Mammary epithelial cell (primary cell): ENCODE measurements at regions of chrX and their contacts with region 1.

Region 1: GRCh38 chrX:38754102-38754790 is 47.0 kb upstream of the MID1IP1 start:
- DNase-seq: peak; percentile 35
- H3K4me3 ChIP-seq: no peak overlapping the region
- H3K27ac ChIP-seq: no peak overlapping the region
- H3K4me1 ChIP-seq: no peaks in the 10 kb centered on the region
- H3K27me3 ChIP-seq: peaks cover 2% of the 10 kb centered on the region
- CTCF ChIP-seq: peak; percentile 59 to 74

Region 2: DNA sequence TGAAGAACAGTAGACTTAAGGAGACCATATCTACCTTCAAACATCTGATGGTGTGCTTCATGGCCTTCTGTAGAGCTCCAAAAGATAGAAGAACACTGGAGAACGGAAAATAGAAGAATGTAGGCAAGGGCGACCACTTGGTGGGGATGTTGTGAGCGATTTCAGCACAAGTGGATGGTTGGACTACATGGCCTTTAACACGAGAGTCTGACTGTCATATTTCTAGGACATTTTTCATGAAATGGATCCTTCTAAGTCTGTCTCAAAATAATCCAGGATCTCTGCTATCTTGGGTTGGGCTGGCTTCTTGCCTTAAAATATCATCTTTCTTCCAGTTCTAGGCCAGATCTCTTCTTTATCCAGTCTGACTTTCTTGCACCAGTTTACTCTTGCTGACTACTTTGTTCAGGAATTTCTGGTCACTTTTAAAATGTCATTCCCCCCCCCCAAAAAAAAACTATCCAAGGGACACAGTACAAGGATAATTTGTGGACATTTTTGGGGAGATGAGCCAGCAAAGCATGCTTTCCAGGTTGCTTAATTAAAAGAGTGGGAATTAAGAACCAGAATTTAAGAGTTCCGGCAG is 45.8 kb after region 1 on chrX:
- CTCF ChIA-PET with region 1: no interaction called
- dilution Hi-C with region 1: no loop called
- in situ Hi-C with region 1: no loop called
- intact Hi-C with region 1: no loop called
- DNase-seq: no peak
- H3K4me3 ChIP-seq: no peak overlapping the region
- H3K27ac ChIP-seq: peak overlapping the region; percentile 52
- H3K4me1 ChIP-seq: peaks cover 20% of the 10 kb centered on the region
- H3K27me3 ChIP-seq: no peaks in the 10 kb centered on the region
- CTCF ChIP-seq: no peak

Region 3: DNA sequence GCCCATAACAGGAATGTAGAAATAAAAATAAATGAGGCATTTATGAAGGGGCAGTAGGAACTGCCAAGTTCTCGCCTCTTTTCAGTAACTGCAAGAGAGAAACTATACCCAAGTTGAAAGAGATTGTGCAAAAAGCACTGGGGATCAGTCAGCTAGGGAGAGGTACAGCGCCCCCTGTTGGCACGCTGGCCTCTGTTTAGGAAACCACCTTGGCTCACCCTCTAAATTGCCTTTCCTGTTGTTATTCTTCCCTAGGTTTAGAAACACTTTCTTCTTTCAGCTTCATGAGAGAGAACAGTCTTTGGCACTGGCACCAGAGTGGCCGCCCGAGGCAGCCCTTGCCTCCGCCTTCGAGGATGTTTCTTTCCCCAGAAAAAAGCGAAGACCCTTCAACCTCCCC is 395.5 kb after region 1 on chrX:
- CTCF ChIA-PET with region 1: no interaction called
- dilution Hi-C with region 1: no loop called
- in situ Hi-C with region 1: no loop called
- intact Hi-C with region 1: loop called (anchors 1 kb)
- DNase-seq: peak; percentile 12
- H3K4me3 ChIP-seq: no peak overlapping the region
- H3K27ac ChIP-seq: no peak overlapping the region
- H3K4me1 ChIP-seq: no peaks in the 10 kb centered on the region
- H3K27me3 ChIP-seq: no peaks in the 10 kb centered on the region
- CTCF ChIP-seq: peak; percentile 63 to 85

Region 4: GRCh38 chrX:39242187-39242586 is 487.9 kb after region 1 on chrX:
- CTCF ChIA-PET with region 1: no interaction called
- dilution Hi-C with region 1: no loop called
- in situ Hi-C with region 1: no loop called
- intact Hi-C with region 1: loop called (anchors 1 kb)
- DNase-seq: peak; percentile 14
- H3K4me3 ChIP-seq: no peak overlapping the region
- H3K27ac ChIP-seq: no peak overlapping the region
- H3K4me1 ChIP-seq: no peaks in the 10 kb centered on the region
- H3K27me3 ChIP-seq: peaks cover 3% of the 10 kb centered on the region
- CTCF ChIP-seq: peak; percentile 45 to 54

Region 5: DNA sequence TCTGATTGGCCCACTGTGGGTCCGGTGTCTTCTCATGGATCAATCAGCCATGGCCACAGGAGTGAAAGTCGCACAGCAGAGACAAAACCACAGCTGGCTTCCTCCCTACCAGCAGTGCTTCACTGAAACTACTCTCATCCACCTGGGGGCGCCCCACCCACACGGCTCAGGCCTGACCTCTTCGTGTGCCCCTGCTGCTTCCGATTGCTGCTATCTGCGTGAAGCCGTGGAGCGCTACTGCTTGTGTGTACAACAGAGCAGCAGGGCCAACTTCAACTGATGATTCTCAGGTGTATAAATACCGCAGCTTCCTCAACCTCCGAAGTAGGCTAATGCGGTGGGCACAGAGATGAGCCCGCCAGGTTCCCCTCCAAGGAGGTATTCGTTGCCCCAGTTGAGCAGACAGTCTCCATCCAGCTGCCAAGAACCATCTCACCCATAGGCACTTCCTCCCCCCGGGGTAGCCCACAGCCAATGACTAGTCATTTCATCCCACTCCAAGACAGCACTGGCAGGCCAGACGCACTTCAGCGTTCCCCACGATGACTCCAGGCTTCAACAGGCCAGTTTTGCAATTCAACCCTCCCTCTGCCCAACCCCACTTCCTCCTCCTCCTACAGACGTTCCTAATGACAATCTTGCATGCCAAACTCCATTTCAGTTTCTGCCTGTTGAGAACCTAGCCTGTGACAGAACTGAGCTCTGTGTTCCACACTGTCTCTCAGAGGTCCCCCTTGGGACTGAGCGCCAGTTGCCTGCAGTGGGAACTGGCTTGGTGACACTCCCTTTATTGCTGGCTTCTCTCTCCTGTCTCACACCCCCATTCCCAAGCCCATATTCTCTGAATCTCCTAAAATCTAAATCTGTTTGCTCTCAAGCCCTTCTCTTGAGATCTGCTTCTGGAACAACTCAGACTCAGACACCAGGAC is 1785.2 kb after region 1 on chrX:
- CTCF ChIA-PET with region 1: no interaction called
- dilution Hi-C with region 1: no loop called
- in situ Hi-C with region 1: no loop called
- intact Hi-C with region 1: loop called (anchors 10 kb)
- DNase-seq: peak; percentile 32
- H3K4me3 ChIP-seq: no peak overlapping the region
- H3K27ac ChIP-seq: no peak overlapping the region
- H3K4me1 ChIP-seq: no peaks in the 10 kb centered on the region
- H3K27me3 ChIP-seq: peaks cover 8% of the 10 kb centered on the region
- CTCF ChIP-seq: peak in 1 of 2 donors; percentile 13